Heart left ventricle (tissue), 16 donors: ENCODE measurements at regions of chr1 and their contacts with region 1.

Region 1: GRCh38 chr1:91412371-91412770 is 7.7 kb upstream of the HFM1 start:
- DNase-seq: no peak
- ATAC-seq: no peak
- H3K4me3 ChIP-seq: no peak overlapping the region
- H3K27ac ChIP-seq: no peak overlapping the region
- H3K4me1 ChIP-seq: no peaks in the 10 kb centered on the region
- H3K27me3 ChIP-seq: peaks cover 0 to 3% (median 0%) of the 10 kb centered on the region in 9 donors
- CTCF ChIP-seq: no peak
- POLR2A ChIP-seq: no peak

Region 2: GRCh38 chr1:91913018-91913417 is 500.6 kb after region 1 on chr1:
- intact Hi-C with region 1: loop called in 1 of 10 experiments (anchors 5 kb)
- DNase-seq: no peak
- ATAC-seq: no peak
- H3K4me3 ChIP-seq: no peak overlapping the region
- H3K27ac ChIP-seq: no peak overlapping the region
- H3K4me1 ChIP-seq: peaks cover 0 to 6% (median 0%) of the 10 kb centered on the region in 12 donors
- H3K27me3 ChIP-seq: no peaks in the 10 kb centered on the region
- CTCF ChIP-seq: no peak
- POLR2A ChIP-seq: no peak